Activated CD4-positive, alpha-beta memory T cell treated with anti-CD3 and anti-CD28 coated beads for 36 hours (primary cell): ENCODE measurements at regions of chr18 and their contacts with region 1.

Region 1: DNA sequence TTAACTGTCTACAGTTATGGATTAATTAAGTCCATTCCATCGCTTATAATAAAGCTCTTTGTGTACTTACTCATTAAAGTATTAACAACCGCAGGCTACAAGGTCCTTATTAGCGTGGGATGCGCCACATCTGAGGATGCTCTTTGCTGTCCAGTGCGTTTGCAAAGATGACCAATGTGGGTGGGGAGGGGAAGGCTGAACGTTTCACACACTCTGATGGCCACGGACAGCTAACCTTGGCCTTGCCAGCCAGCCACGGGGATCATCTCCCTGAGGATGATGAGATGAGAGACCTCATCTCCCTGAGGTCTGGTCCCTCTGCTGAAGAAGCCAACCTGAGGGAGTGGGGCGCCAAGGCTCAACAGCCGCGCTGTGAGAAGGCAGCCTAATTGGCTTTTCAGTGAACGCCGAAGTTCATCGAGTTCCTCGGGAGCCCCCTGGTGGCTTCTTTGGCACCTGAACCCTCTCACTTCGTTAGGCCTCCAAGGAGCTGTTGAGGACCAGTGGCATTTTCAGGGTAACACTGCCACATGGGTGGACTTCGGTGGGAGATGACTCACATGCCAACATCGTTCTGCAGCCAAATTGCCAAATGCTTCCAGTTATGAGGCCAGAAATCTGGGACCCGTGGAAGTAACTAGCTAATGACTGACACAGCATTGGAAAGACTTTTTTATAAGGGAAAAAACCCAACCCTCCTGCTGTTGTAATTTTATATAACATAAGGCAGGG is 69.3 kb upstream of the SEC11C start:
- DNase-seq: peak; percentile 85
- H3K4me3 Mint-ChIP-seq: no peak overlapping the region
- H3K27ac Mint-ChIP-seq: no peak overlapping the region
- H3K4me1 Mint-ChIP-seq: peaks cover 2% of the 10 kb centered on the region
- H3K27me3 Mint-ChIP-seq: peaks cover 1% of the 10 kb centered on the region

Region 2: DNA sequence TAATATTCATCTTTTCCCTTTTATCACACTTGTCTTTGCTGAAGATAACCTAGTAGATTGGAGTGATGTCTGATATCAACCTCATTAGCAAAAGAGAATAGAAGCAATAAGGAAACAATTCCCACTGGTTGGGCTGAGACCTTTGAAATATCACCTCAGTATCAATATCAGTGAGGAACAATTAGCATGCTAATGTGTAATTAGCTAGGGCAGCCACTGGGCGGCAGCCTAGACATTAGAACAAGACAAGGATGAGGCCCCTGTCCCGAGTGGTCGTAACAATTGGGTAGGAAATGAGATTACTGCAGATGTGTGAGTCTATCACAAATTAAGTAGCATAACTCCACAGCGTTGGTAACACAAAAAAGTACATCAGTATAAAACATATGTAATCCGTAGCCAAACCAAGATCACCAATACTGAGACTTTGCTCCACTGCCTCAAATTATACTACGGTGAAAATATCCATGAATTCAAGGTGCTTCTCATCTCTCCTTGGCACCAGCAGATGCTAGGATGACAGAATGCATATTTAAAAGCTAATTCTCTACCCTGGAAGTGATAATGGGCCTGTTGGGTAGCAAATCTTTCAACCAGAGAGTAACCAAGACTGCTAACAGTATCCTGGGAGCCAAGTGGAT is 540.5 kb before region 1 on chr18:
- CTCF ChIA-PET with region 1: no interaction called
- POLR2A ChIA-PET with region 1: no interaction called
- intact Hi-C with region 1: loop called (anchors 5 kb)
- DNase-seq: peak; percentile 76
- H3K4me3 Mint-ChIP-seq: no peak overlapping the region
- H3K27ac Mint-ChIP-seq: peak overlapping the region; percentile 43
- H3K4me1 Mint-ChIP-seq: peaks cover 19% of the 10 kb centered on the region
- H3K27me3 Mint-ChIP-seq: peaks cover 6% of the 10 kb centered on the region

Region 3: DNA sequence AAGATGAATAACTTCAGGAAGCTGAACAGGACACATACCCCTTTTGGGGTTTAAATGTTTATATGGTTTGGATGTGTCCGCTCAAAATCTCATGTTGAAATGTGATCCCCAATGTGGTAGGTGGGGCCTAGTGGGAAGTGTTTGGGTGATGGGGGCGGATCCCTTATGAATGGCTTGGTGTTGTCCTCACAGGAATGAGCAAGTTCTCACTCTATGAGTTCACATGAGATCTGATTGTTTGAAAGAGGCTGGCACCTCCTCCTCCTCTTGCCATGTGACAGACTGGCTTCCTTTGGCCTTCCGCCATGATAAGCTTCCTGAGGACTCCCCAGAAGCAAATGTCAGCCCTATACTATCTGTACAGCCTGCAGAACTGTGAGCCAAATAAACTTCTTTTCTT is 294.3 kb before region 1 on chr18:
- CTCF ChIA-PET with region 1: interaction called, 109 read pairs
- POLR2A ChIA-PET with region 1: no interaction called
- intact Hi-C with region 1: loop called (anchors 1 kb)
- DNase-seq: no peak
- H3K4me3 Mint-ChIP-seq: no peak overlapping the region
- H3K27ac Mint-ChIP-seq: no peak overlapping the region
- H3K4me1 Mint-ChIP-seq: no peaks in the 10 kb centered on the region
- H3K27me3 Mint-ChIP-seq: peaks cover 10% of the 10 kb centered on the region

Region 4: DNA sequence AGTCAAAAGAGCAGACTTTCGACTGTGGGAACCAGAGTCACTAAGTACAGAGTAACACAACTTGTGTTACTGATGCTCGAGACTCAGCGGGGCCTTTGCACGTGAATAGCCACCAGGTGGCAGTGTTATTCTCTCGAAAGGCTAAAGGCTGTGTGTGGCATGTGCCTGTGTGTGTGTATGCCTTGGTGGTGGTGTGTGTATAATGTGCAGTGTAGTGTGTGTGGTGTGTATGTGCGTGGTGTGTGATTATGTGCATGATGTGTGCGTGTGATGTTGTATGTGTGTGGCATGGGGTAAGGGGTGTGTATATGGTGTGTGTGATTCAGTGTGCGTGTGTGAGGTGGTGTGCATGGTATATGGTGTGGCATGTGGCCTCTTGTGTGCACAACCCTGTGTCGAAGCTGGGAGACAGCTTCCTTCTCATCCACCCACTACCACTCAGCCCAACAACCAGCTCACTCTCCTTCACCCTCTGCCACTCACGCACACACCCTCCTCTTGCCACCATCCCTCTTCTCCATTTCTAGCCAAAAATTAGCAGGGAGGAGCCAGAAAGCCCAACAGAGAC is 288.6 kb before region 1 on chr18:
- CTCF ChIA-PET with region 1: interaction called, 72 read pairs
- POLR2A ChIA-PET with region 1: no interaction called
- intact Hi-C with region 1: loop called (anchors 1 kb)
- DNase-seq: peak; percentile 80
- H3K4me3 Mint-ChIP-seq: no peak overlapping the region
- H3K27ac Mint-ChIP-seq: no peak overlapping the region
- H3K4me1 Mint-ChIP-seq: no peaks in the 10 kb centered on the region
- H3K27me3 Mint-ChIP-seq: peaks cover 14% of the 10 kb centered on the region

Region 5: DNA sequence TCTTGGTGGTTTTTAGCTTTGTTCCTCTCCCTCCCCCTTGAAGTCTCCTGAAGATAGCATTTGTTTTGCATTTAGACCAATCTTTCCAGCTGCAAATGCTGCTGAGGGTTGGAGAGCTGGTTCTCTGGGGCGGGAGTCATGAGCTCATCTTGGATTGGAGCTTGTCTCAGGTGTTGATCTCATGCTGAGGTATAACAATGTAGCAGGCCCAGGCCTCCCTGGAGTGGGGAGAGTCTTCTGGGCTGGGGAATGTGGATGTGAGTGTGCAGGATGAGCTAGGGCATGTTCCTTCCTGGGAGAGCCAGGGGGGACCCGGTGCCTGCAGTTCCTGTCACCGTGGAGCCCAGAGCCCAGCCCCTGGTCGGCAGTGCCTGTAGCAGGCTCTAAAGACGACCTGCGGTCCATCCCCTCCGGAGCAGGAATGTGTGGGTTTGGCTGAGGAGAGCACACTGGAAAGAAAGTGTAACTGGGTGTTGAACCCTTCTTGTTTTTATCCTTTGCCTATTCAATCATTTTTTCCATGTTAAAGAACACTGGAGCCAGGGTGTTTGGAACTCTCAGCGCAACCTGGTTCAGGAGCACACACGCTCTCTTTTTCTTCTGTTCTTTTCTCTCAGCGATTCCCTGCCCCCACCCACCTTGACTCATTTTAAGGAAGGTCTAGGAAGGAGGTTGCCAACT is 202.9 kb before region 1 on chr18:
- CTCF ChIA-PET with region 1: no interaction called
- POLR2A ChIA-PET with region 1: no interaction called
- intact Hi-C with region 1: no loop called
- DNase-seq: no peak
- H3K4me3 Mint-ChIP-seq: no peak overlapping the region
- H3K27ac Mint-ChIP-seq: no peak overlapping the region
- H3K4me1 Mint-ChIP-seq: peaks cover 9% of the 10 kb centered on the region
- H3K27me3 Mint-ChIP-seq: peaks cover 45% of the 10 kb centered on the region

Region 6: DNA sequence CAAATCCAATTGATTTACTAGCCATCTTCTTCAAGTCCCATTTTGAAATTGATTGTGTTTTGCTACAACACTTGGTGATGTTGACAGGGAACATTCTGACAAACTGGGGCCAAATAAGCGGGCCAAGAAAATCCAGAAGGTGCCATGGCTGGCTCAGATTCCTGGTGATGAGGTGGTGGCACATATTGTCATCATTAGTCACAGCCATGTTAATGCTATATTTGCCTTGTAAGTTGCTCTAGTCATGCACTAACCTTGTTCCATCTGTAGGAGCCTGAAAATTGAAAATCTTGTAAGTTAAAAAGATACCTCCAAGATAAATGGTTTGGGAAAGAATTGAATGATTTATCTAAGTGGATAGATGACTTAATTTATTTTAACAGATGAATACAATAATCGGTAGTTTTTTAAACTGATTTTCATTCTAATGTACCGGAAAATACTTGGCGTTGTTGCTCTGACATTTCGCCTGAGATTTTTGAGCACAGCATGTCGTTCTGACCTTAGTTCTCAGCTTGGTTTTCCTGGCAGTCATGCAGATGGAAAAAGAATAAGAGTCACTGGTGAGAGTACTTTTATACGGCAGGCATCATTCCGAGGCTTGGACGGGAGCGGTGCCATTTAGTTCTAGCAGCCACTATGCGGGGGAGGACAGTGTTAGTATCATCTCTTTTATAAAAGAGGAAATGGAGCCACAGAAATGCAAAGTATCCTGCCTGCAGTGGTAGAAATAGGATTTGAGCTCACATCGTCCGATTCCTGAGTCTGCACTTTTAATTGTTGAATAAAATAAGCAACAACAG is 71.7 kb before region 1 on chr18:
- CTCF ChIA-PET with region 1: no interaction called
- POLR2A ChIA-PET with region 1: no interaction called
- intact Hi-C with region 1: no loop called
- DNase-seq: no peak
- H3K4me3 Mint-ChIP-seq: no peak overlapping the region
- H3K27ac Mint-ChIP-seq: no peak overlapping the region
- H3K4me1 Mint-ChIP-seq: no peaks in the 10 kb centered on the region
- H3K27me3 Mint-ChIP-seq: peaks cover 8% of the 10 kb centered on the region

Region 7: GRCh38 chr18:59056706-59057492 is 13.4 kb before region 1 on chr18:
- CTCF ChIA-PET with region 1: interaction called, 38 read pairs
- POLR2A ChIA-PET with region 1: no interaction called
- intact Hi-C with region 1: no loop called
- DNase-seq: peak; percentile 82
- H3K4me3 Mint-ChIP-seq: no peak overlapping the region
- H3K27ac Mint-ChIP-seq: no peak overlapping the region
- H3K4me1 Mint-ChIP-seq: no peaks in the 10 kb centered on the region
- H3K27me3 Mint-ChIP-seq: peaks cover 9% of the 10 kb centered on the region

Region 8: DNA sequence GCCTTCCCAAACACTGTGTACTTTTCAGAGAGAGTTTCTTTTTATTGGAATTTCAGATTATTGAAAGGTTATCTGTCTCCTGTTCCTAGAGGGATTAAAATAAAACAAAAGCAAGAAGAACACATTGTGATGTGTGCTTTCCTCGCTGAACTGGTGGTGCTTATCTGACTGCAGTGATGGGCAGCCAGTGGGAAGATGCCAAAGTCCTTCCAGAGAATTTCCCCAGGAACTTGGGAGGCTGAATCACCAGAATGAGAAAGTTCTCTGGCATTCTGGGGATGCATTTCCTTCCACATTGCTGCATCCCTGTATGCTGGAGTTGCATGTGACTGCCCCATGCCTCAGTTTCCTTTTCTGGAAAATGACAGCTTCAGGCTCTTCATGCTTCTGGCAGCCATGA is 15.4 kb after region 1 on chr18:
- CTCF ChIA-PET with region 1: interaction called, 57 read pairs
- POLR2A ChIA-PET with region 1: no interaction called
- intact Hi-C with region 1: no loop called
- DNase-seq: no peak
- H3K4me3 Mint-ChIP-seq: no peak overlapping the region
- H3K27ac Mint-ChIP-seq: no peak overlapping the region
- H3K4me1 Mint-ChIP-seq: peaks cover 8% of the 10 kb centered on the region
- H3K27me3 Mint-ChIP-seq: peaks cover 16% of the 10 kb centered on the region

Region 9: DNA sequence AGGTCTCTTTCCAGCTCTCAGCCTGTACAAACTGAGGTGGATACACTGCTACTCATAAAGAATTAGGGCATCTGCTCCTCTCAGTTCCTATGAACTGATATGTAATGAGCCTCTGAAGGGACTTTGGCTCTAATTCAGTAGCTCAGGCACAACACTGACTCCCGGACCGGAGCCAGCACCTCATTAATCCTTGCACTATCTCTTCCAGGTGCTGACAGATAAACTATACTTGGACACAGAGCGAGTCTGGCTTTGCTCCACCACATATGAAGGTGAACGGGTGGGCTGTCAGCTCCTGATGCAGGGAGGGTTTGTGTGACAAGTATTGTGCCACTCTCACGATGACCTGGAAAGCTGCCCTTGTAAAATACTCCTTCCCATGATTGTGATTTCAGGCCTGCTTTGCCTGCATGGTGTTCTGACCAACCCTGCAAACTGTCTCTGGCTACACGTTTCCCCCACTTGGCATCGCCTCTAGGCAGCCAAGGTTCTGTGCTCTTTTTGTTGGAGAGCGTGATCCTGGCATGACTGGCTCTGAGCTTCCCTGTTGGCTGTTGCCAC is 400.3 kb after region 1 on chr18:
- CTCF ChIA-PET with region 1: no interaction called
- POLR2A ChIA-PET with region 1: no interaction called
- intact Hi-C with region 1: no loop called
- DNase-seq: no peak
- H3K4me3 Mint-ChIP-seq: no peak overlapping the region
- H3K27ac Mint-ChIP-seq: no peak overlapping the region
- H3K4me1 Mint-ChIP-seq: no peaks in the 10 kb centered on the region
- H3K27me3 Mint-ChIP-seq: peaks cover 12% of the 10 kb centered on the region